ENCODE measurements at regions of chr4 and their contacts with region 1.

Region 1: GRCh38 chr4:99563310-99564186 is at the start of gene TRMT10A:
- DNase-seq: peak; percentile 95 to 99 (median 98)

Region 2: DNA sequence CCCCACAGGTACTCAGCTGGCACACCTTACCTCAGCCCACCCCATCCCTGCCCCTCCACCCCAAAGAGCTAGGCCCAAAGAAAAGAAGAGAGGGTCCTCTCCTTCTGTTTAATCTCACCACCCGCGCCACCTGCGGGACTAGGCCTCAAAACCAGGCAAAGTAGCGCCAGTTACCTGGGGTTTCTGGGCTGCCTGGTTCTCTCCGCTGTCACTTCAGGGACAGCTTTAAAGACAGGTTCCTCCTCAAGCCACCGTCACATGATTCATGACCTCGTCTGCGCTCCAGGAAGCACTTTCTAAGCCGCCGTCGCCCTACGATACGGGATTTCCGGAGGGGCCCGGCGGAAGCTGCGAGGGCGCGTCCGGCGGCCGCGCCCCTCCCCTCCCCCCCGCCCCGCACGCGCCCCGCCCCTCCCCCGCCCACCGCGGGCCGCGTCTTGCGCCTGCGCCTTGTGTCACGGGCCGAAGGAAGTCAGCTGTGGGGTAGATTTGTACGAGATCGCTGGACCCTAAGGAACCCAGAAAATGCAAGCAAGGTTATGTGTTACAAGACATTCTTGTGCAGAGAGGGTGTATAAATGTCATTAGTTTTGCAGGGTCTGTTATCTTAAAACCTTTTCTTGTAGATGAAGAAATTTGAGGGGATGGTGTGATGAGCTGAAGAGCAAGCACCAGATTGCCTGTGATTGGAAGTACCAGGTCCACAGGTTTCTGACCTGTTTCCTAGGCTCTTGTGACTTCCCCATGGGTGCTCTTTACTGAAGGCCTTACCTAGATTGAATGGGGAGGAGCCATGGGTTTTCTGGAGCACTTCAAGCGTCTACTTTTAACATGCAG is 330.8 kb after region 1 on chr4 and contains the start of gene LAMTOR3:
- intact Hi-C with region 1: loop called (anchors 10 kb)
- DNase-seq: peak; percentile 77 to 97 (median 92)